Esophagus squamous epithelium (tissue), 5 donors: ENCODE measurements at regions of chr22 and their contacts with region 1.

Region 1: GRCh38 chr22:39343259-39344048 is 6.3 kb upstream of the SYNGR1 start:
- DNase-seq: no peak
- H3K4me3 ChIP-seq: no peak overlapping the region
- H3K27ac ChIP-seq: no peak overlapping the region
- H3K4me1 ChIP-seq: peaks cover 0 to 13% (median under 1%) of the 10 kb centered on the region in 3 donors
- H3K27me3 ChIP-seq: no peaks in the 10 kb centered on the region
- CTCF ChIP-seq: peak; percentile 39 to 82 (median 64)
- POLR2A ChIP-seq: no peak

Region 2: DNA sequence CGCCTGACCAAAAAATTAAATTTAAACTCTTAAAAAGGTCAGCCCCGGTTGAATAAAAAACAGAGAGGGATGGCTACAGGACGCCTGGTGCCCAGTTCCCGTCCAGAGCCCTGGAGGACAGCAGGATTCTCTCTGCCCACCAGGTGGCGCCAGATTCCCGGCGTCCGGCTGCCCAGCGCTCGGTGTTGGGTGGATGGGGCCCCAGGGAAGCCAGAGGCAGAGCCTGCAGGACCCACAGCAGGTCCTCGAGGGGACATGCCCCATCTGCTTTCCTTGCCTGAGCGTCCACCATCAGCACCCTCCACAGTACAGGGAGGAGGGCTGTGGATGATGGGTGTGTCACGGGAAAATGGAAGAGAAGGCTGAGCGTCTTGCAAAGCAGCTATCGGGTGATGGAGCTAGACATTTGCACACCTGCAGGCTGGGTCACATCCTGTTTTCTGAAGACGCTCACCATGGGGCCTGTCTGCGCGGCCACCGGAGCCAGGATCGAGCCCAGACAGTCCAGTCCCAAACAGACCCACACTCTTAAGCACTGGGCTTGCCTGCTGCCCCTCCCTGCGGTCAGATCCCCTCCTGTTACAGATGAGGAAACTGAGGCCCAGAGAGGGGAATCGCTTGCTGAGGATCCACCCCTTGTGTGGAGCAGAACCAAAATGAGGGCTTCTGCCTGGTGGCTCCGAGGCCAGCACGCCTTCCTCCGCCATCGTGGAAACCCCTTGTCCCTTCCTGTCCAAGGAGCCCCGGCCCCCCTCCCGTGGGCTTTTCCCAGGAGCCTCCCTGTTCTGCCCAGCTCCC is 172.4 kb before region 1 on chr22:
- intact Hi-C with region 1: no loop called
- DNase-seq: no peak
- H3K4me3 ChIP-seq: peak overlapping the region in 1 of 4 donors; percentile 48
- H3K27ac ChIP-seq: no peak overlapping the region
- H3K4me1 ChIP-seq: peaks cover 23 to 56% (median 37%) of the 10 kb centered on the region in 3 donors
- H3K27me3 ChIP-seq: peaks cover 0 to 5% (median 0%) of the 10 kb centered on the region in 4 donors
- CTCF ChIP-seq: peak; percentile 95 to 99 (median 97)
- POLR2A ChIP-seq: no peak

Region 3: GRCh38 chr22:39519681-39520053 is 176.2 kb after region 1 on chr22:
- intact Hi-C with region 1: loop called (anchors 10 kb)
- DNase-seq: no peak
- H3K4me3 ChIP-seq: peak overlapping the region; percentile 92 to 99 (median 97)
- H3K27ac ChIP-seq: peak overlapping the region; percentile 99 to 100 (median 100)
- H3K4me1 ChIP-seq: peaks cover 25 to 56% (median 41%) of the 10 kb centered on the region in 3 donors
- H3K27me3 ChIP-seq: no peaks in the 10 kb centered on the region
- CTCF ChIP-seq: peak in 3 of 6 experiments; percentile 27 to 38 (median 30)
- POLR2A ChIP-seq: peak in 2 of 4 donors; percentile 56 to 81